Ovary (tissue), 10 donors: ENCODE measurements at regions of chr5 and their contacts with region 1.

Region 1: DNA sequence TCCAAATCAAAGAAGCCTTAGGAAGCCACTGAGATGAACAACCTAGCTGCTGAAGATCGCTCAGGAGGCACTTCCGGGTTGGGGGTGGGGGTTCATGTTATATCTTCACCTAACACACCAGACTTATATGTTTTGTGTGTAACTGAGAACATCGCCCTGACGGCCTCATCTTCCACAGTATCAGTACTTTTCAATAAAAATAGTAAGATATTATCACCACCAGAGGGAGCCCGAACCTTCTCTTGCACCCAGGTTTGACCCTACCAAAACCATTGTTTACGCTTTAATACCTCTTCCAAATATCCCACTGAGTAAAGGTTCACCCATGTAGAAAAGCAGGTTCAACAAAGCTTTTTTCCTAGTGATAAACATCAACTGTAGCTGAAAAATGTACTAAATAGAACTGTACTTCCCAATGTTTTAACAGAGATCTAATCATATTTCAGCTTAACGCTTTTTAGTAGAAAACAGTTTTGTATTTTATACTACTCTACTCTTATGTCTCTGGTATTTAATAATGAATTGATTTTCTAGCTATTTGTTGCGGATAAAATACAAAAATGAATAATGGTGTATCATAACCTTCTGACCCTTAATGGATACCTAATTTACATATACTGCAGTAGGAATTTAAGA is 244.0 kb downstream of the EPB41L4A start:
- DNase-seq: no peak
- H3K4me3 ChIP-seq: no peak overlapping the region
- H3K27ac ChIP-seq: no peak overlapping the region
- H3K4me1 ChIP-seq: no peaks in the 10 kb centered on the region
- H3K27me3 ChIP-seq: no peaks in the 10 kb centered on the region
- CTCF ChIP-seq: peak in 2 of 3 donors; percentile 14 to 28
- EP300 ChIP-seq: no peak
- POLR2A ChIP-seq: no peak

Region 2: DNA sequence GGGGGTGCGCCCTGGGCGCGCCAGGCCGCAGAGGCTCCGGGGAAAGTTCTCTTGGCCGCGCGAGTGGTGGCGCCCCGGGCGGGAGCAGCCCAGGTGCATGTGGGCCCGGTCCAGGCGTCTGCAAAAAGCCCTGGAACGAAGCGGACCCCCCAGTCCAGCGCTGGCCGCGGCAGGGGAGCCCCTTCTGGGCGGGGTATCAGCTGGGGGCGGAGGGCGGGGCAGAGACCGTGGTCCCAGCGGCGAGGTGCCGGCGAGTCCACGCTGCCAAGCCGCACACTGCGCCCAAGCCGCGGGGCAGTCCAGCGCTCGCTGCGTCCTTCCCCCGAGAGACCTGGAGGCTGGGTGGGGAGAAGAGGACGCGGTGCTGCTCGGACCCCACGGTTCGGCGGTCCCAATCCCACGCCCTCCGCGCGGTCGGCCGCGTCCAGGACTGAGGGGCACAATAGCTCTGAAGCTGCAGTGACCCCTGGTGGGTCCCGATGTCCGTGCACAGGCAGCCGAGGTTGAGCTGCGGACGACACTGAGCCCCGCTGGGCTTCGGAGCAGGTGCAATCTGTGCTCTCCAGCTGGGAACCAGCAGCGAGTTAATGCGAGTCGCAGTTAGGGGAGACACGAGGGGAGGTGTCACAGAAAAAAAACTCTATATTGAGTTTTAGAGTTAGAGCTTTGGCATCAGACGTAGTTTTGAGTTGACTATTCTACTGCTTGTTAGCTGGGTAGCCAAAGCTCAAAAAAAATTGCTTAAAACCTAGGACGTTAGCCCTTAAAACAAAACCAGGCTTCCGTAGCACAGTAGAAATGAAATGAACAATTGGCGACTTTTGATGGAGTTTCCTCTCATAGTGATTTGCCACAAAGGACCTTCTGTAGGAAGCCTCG is 245.1 kb after region 1 on chr5:
- intact Hi-C with region 1: loop called (anchors 10 kb)
- DNase-seq: peak; percentile 65 to 80 (median 72)
- H3K4me3 ChIP-seq: peak overlapping the region; percentile 82
- H3K27ac ChIP-seq: peak overlapping the region; percentile 28 to 60
- H3K4me1 ChIP-seq: no peaks in the 10 kb centered on the region
- H3K27me3 ChIP-seq: no peaks in the 10 kb centered on the region
- CTCF ChIP-seq: peak; percentile 44 to 65 (median 52)
- EP300 ChIP-seq: no peak
- POLR2A ChIP-seq: no peak